ENCODE measurements at regions of chr3 and their contacts with region 1.

Region 1: GRCh38 chr3:127735767-127736704 is 63.3 kb downstream of the ABTB1 start:
- DNase-seq: peak; percentile 59
- H3K4me3 ChIP-seq: no peak overlapping the region
- H3K27ac ChIP-seq: peak overlapping the region; percentile 91
- H3K4me1 ChIP-seq: peaks cover 43% of the 10 kb centered on the region
- H3K27me3 ChIP-seq: no peaks in the 10 kb centered on the region
- CTCF ChIP-seq: no peak
- POLR2A ChIP-seq: no peak

Region 2: DNA sequence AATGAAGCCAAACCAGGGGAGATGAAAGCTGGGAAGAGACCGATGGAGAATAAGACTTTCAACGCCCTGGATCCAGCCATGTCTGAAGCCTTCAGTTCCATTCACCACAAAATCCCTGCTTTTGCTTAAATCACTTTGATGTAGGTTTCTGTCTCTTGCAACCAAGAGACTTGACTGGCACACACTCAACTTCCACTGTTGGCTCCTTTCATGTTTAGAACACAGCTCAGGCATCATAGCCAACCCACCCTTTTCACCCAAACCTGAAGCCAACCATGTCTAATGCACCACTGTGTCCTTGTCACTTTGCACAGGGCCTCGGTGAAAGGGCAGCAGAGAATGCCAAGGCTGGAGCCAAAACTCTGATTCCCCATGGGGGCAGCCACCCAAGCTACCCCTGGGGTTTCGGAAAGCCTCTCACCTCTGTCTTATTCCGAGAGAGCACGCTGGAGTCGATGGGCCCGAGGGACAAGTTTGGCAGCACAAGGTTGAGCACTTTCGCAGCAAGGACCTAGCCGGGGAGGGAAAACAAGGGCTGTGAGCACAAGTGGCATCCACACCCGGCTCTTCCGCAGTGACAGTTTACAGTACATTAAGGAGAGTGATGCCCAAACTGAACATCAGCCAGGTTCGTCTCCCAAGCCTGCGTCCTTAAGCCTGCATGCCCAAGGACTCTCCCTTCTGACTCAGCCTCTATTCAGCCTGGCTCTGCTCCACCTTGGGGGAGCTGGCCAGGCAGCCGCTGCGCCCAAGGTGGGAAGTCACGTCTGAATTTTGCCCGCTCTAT is 25.7 kb before region 1 on chr3:
- CTCF ChIA-PET with region 1: interaction called, 7 read pairs
- POLR2A ChIA-PET with region 1: no interaction called
- dilution Hi-C with region 1: no loop called
- intact Hi-C with region 1: loop called (anchors 2 kb)
- DNase-seq: no peak
- H3K4me3 ChIP-seq: no peak overlapping the region
- H3K27ac ChIP-seq: no peak overlapping the region
- H3K4me1 ChIP-seq: peaks cover 21% of the 10 kb centered on the region
- H3K27me3 ChIP-seq: no peaks in the 10 kb centered on the region
- CTCF ChIP-seq: no peak
- POLR2A ChIP-seq: no peak

Region 3: GRCh38 chr3:127768346-127769008 is 32.4 kb after region 1 on chr3:
- CTCF ChIA-PET with region 1: no interaction called
- POLR2A ChIA-PET with region 1: no interaction called
- dilution Hi-C with region 1: no loop called
- intact Hi-C with region 1: loop called (anchors 1 kb)
- DNase-seq: peak; percentile 70
- H3K4me3 ChIP-seq: no peak overlapping the region
- H3K27ac ChIP-seq: peak overlapping the region; percentile 81
- H3K4me1 ChIP-seq: peaks cover 25% of the 10 kb centered on the region
- H3K27me3 ChIP-seq: no peaks in the 10 kb centered on the region
- CTCF ChIP-seq: no peak
- POLR2A ChIP-seq: no peak